Common myeloid progenitor, CD34-positive (primary cell): ENCODE measurements at regions of chr3 and their contacts with region 1.

Region 1: GRCh38 chr3:184345317-184346144 is 8.1 kb downstream of the FAM131A start:
- DNase-seq: peak in 2 of 3 donors; percentile 57 to 70
- H3K4me3 ChIP-seq: no peak overlapping the region
- H3K27ac ChIP-seq: no peak overlapping the region
- H3K4me1 ChIP-seq: peaks cover 0 to 30% (median 11%) of the 10 kb centered on the region in 4 experiments
- H3K27me3 ChIP-seq: no peaks in the 10 kb centered on the region

Region 2: GRCh38 chr3:184005941-184006507 is 339.5 kb before region 1 on chr3:
- CTCF ChIA-PET with region 1: no interaction called
- POLR2A ChIA-PET with region 1: no interaction called
- DNase-seq: peak; percentile 76 to 95 (median 90)
- H3K4me3 ChIP-seq: peak overlapping the region in 4 of 7 experiments; percentile 22 to 67 (median 52)
- H3K27ac ChIP-seq: peak overlapping the region in 1 of 2 experiments; percentile 6
- H3K4me1 ChIP-seq: peaks cover 8 to 20% (median 15%) of the 10 kb centered on the region in 4 experiments
- H3K27me3 ChIP-seq: no peaks in the 10 kb centered on the region

Region 3: GRCh38 chr3:184362668-184363540 is 17.4 kb after region 1 on chr3:
- CTCF ChIA-PET with region 1: interaction called, 13 read pairs
- POLR2A ChIA-PET with region 1: no interaction called
- DNase-seq: peak; percentile 98
- H3K4me3 ChIP-seq: peak overlapping the region; percentile 54 to 92 (median 74)
- H3K27ac ChIP-seq: peak overlapping the region in 1 of 2 experiments; percentile 77
- H3K4me1 ChIP-seq: peaks cover 0 to 33% (median 31%) of the 10 kb centered on the region in 4 experiments
- H3K27me3 ChIP-seq: peaks cover 0 to 3% (median 0%) of the 10 kb centered on the region in 5 experiments